Head of caudate nucleus (tissue), 42 donors: ENCODE measurements at regions of chr6 and their contacts with region 1.

Region 1: GRCh38 chr6:100664274-100665040 is 199.7 kb upstream of the SIM1 start:
- DNase-seq: peak in 6 of 42 donors; percentile 3 to 43 (median 6)

Region 2: GRCh38 chr6:100116411-100117194 is 547.9 kb before region 1 on chr6:
- intact Hi-C with region 1: loop called (anchors 5 kb)
- DNase-seq: peak in 35 of 42 donors; percentile 22 to 80 (median 49)

Region 3: DNA sequence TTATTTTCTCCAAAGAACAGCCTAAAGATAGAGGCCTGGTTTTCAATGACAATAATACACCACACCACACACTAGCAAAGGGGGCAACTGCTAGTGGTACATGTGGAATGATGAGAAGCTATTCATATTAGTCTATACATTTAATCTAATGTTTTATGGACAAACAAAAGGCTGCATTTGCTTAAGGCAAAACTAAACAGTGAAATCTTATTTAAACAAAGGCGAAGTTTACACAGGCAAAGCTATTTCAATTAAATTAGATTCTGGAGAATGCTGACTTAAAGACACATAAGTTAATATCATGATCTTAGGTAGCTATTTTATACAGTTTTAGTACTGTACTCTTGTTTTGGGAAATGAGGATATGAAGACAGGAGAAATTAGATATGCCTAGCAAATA is 145.9 kb before region 1 on chr6:
- intact Hi-C with region 1: no loop called
- DNase-seq: no peak

Region 4: GRCh38 chr6:101689156-101689555 is 1024.7 kb after region 1 on chr6:
- intact Hi-C with region 1: no loop called
- DNase-seq: no peak